PC-9 (cell line): ENCODE measurements at regions of chr3 and their contacts with region 1.

Region 1: GRCh38 chr3:98329392-98330124 is 24.1 kb upstream of the OR5K4 start:
- DNase-seq: peak; percentile 44 to 46
- H3K4me3 ChIP-seq: no peak overlapping the region
- H3K27ac ChIP-seq: no peak overlapping the region
- H3K4me1 ChIP-seq: no peaks in the 10 kb centered on the region
- H3K27me3 ChIP-seq: no peaks in the 10 kb centered on the region
- CTCF ChIP-seq: peak; percentile 91

Region 2: DNA sequence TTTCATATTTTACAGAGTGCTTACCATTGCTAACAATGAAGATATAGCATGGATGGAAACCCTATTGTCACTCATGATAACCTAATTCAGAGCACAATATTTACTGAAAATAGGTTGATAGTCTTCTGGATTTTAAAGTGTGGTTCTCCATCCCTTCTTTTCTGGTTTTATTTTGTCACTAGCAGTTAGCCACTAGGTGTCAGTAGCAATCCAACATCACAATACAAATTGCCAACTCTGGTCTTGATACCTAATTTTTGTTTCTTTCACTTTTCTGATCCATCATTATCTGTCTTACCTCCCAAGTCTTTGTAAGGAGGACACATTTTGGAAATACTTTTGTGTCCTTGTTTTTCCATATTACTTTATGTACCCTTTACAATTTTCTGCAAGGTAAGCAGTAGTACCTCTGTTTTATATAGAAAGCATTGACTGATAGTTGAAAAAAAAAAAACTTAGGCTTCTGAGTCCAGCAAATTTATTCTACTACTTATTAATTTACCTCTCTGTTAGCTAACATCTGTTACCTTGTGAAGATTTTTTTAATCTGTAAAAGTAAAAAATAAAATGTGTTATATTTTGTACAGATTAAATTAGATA is 536.0 kb before region 1 on chr3:
- CTCF ChIA-PET with region 1: no interaction called
- POLR2A ChIA-PET with region 1: no interaction called
- intact Hi-C with region 1: loop called (anchors 10 kb)
- DNase-seq: peak in 1 of 2 experiments; percentile 59
- H3K4me3 ChIP-seq: no peak overlapping the region
- H3K27ac ChIP-seq: no peak overlapping the region
- H3K4me1 ChIP-seq: no peaks in the 10 kb centered on the region
- H3K27me3 ChIP-seq: no peaks in the 10 kb centered on the region
- CTCF ChIP-seq: peak; percentile 97

Region 3: DNA sequence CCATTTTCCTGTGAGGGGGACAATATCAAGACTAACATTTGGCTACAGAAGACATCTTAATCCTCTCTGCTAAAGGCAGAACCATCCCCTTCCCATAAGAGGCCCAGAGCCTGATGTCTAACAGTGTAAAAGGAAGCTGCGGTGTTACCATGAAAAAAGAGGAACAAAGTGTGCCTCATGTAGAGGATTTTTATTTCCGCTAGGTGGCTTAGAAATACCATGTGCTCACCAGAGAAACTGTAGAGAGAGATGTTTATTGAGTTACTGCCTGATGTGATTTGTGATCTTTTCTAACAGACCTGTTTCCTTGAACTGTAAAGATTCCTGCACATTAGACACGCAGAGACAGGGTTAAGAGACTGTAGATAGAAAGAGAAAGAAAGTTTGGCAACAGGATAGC is 141.0 kb before region 1 on chr3:
- CTCF ChIA-PET with region 1: interaction called, 4 read pairs
- POLR2A ChIA-PET with region 1: no interaction called
- intact Hi-C with region 1: loop called (anchors 1 kb)
- DNase-seq: no peak
- H3K4me3 ChIP-seq: no peak overlapping the region
- H3K27ac ChIP-seq: no peak overlapping the region
- H3K4me1 ChIP-seq: no peaks in the 10 kb centered on the region
- H3K27me3 ChIP-seq: no peaks in the 10 kb centered on the region
- CTCF ChIP-seq: peak; percentile 50; the same call in 1 of the 2 replicates

Region 4: DNA sequence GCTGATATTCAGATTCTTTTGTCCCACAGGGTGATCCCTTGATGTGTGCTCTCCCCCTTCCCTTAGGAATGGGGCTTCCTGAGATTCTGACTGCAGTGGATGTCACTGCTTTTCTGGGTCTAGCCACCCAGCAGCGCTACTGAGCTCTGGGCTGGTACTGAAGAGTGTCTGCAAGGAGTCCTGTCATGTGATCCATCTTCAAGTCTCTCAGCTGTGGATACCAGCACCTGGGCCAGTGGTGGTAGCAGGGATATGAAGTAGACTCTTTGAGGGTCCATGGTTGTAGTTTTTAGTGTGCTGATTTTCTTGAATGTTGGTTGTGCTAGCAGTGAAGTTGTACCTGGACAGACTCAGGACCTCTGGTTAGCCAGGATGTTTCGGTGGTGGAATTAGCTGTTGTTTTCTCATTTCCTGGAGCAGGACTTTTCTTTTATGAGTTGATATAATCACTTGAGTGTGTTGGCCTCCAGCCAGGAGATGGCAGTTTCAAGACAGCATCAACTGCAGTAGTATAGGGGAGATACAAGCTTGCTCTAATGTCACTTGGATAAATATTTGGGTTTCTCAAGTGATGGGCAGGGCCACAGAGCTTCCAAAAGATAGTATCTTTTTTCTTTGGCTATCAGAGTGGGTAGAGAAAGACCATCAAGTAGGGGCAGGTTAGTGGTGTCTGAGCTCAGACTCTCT is 153.0 kb after region 1 on chr3:
- CTCF ChIA-PET with region 1: no interaction called
- POLR2A ChIA-PET with region 1: no interaction called
- intact Hi-C with region 1: no loop called
- DNase-seq: peak; percentile 63 to 69
- H3K4me3 ChIP-seq: peak overlapping the region; percentile 35; the same call in 1 of the 2 replicates
- H3K27ac ChIP-seq: peak overlapping the region; percentile 94
- H3K4me1 ChIP-seq: peaks cover 30% of the 10 kb centered on the region
- H3K27me3 ChIP-seq: no peaks in the 10 kb centered on the region
- CTCF ChIP-seq: no peak

Region 5: DNA sequence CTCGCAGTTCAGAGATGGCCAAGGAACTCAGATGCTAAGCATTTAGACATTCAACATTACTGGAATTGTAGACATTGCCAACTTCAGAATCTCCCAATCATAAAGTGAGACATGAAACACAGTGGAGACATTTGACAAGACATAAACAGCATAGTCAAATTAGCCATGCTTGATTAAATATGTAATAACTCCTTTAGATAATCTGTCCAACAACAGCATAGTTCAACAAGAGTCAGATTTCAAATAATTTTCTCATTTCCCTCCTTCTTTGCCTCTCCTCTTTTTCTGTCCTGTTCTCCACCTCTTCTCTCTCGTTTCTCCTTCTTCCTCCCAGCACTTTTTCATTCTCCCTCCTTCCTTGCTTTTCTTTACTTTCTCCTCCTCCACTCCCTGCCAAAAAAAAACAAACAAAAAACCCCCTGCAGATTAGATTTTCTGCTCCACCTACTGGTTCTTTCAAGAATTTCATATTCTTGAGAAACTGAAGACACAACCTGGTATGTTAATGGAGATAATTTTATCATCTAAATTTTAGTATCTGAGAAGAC is 243.7 kb after region 1 on chr3:
- CTCF ChIA-PET with region 1: interaction called, 4 read pairs
- POLR2A ChIA-PET with region 1: no interaction called
- intact Hi-C with region 1: loop called (anchors 1 kb)
- DNase-seq: no peak
- H3K4me3 ChIP-seq: no peak overlapping the region
- H3K27ac ChIP-seq: no peak overlapping the region
- H3K4me1 ChIP-seq: peaks cover 21% of the 10 kb centered on the region
- H3K27me3 ChIP-seq: no peaks in the 10 kb centered on the region
- CTCF ChIP-seq: peak; percentile 95

Region 6: GRCh38 chr3:98732286-98733052 is 402.9 kb after region 1 on chr3:
- CTCF ChIA-PET with region 1: no interaction called
- POLR2A ChIA-PET with region 1: no interaction called
- intact Hi-C with region 1: loop called (anchors 10 kb)
- DNase-seq: peak; percentile 50 to 64
- H3K4me3 ChIP-seq: peak overlapping the region; percentile 73
- H3K27ac ChIP-seq: no peak overlapping the region
- H3K4me1 ChIP-seq: peaks cover 27% of the 10 kb centered on the region
- H3K27me3 ChIP-seq: no peaks in the 10 kb centered on the region
- CTCF ChIP-seq: no peak

Region 7: DNA sequence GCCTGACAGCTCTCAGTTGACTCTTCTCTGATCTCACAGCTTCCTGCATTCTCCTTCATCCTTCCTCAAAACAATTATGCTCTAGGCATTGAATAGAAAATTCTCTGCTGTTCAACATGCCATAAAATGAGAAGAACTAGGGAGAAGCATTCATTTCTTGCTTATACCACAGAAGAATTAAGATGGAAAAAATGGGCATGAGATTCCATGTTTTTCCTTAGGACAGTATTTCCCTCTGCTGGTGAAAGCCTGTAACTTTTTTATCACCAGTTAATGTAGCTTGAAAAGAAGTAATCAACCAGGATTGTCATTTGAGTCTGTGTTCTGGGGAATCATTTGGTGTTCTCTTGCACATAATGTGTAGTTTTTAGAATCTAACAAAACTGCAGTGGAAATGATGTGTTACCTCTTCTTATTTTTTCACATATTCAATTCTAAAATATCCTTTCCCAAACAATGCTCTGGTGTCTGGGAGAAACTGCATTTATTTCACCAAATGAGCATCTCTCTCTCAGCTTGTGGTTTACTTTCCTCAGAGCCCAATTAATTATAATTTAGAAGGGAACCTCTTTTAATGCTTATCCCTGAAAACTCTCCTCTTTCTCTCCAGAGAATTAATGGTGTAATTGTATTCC is 664.7 kb after region 1 on chr3:
- CTCF ChIA-PET with region 1: no interaction called
- POLR2A ChIA-PET with region 1: no interaction called
- intact Hi-C with region 1: loop called (anchors 5 kb)
- DNase-seq: peak in 1 of 2 experiments; percentile 57
- H3K4me3 ChIP-seq: no peak overlapping the region
- H3K27ac ChIP-seq: no peak overlapping the region
- H3K4me1 ChIP-seq: no peaks in the 10 kb centered on the region
- H3K27me3 ChIP-seq: no peaks in the 10 kb centered on the region
- CTCF ChIP-seq: peak; percentile 97